Mammary epithelial cell (primary cell): ENCODE measurements at regions of chr19 and their contacts with region 1.

Region 1: DNA sequence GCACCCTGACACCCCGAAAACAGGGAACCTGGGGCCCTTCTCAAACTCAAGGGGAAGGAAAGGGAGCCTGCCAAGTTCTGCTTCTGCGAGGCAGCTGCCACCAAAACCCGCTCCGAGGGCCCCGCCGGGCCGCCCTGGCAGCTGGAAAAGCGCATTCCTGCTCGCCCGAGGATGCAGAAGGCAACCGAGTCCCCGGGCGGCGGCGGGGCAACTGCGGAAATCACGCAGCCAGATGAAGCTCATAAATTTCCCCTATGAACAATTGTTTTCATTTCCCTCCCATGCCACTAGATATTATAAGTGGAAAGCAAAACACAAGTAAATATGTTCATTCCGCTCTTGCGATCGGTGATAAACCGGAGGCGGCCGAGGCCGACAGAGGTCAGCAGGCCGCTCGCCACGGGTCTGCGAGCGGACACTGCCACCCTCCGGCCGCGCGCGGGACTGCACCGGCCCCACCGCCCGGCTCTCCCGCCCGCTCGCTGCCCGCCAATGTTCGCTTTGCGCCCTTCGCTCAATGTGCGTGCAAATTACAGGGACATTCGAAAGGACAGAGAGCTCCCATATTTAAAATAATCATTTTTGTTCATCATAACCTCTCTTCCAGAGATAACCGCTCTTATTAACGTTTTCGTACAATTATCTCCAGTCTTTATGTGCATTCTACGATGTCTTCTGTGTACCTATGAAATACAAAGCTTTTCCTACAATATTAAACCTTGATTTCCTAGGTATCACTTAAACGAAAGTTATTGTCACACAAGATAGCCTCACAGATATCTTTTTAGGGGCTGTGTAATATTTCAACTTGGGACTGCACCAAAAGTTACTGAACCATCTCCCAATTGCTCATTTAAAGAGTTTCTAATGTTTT is 120.8 kb upstream of the ZNF507 start:
- DNase-seq: peak; percentile 27
- H3K4me3 ChIP-seq: no peak overlapping the region
- H3K27ac ChIP-seq: no peak overlapping the region
- H3K4me1 ChIP-seq: peaks cover 3% of the 10 kb centered on the region
- H3K27me3 ChIP-seq: peaks cover 4% of the 10 kb centered on the region
- CTCF ChIP-seq: peak; percentile 71 to 86

Region 2: GRCh38 chr19:30669329-30670010 is 1555.1 kb before region 1 on chr19:
- CTCF ChIA-PET with region 1: no interaction called
- dilution Hi-C with region 1: no loop called
- in situ Hi-C with region 1: loop called in 1 of 2 experiments (anchors 25 kb)
- intact Hi-C with region 1: loop called (anchors 5 kb)
- DNase-seq: peak; percentile 62
- H3K4me3 ChIP-seq: no peak overlapping the region
- H3K27ac ChIP-seq: no peak overlapping the region
- H3K4me1 ChIP-seq: peaks cover 6% of the 10 kb centered on the region
- H3K27me3 ChIP-seq: peaks cover 1% of the 10 kb centered on the region
- CTCF ChIP-seq: peak; percentile 66 to 84

Region 3: DNA sequence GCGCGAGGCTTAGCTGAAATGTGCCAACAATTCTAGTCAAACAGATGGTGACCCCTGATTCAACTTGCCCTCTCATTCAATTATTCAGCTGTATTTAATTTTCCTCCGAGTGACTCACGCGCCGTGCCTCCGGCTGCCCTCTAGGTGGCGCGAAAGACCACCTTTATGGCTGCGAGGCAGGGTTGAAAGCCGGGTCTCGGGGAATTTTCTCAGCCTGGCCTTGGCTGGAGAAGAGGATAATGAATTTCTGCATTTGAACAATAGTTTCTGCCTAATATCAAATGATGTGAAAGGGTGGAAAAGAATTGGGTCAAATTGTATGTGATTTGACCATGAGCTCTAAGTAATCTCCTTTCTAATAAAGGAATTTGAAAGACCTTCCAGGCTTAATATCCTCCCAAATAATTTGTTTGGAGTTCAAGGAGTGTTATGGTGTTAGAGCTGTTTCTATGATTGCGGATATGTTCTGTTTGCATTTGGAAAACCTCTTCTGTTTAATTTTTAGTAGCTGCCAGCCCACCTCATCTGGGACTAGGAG is 1541.5 kb before region 1 on chr19:
- CTCF ChIA-PET with region 1: no interaction called
- dilution Hi-C with region 1: no loop called
- in situ Hi-C with region 1: loop called in 1 of 2 experiments (anchors 25 kb)
- intact Hi-C with region 1: loop called (anchors 2 kb)
- DNase-seq: peak; percentile 68
- H3K4me3 ChIP-seq: no peak overlapping the region
- H3K27ac ChIP-seq: no peak overlapping the region
- H3K4me1 ChIP-seq: no peaks in the 10 kb centered on the region
- H3K27me3 ChIP-seq: no peaks in the 10 kb centered on the region
- CTCF ChIP-seq: peak; percentile 79 to 87

Region 4: DNA sequence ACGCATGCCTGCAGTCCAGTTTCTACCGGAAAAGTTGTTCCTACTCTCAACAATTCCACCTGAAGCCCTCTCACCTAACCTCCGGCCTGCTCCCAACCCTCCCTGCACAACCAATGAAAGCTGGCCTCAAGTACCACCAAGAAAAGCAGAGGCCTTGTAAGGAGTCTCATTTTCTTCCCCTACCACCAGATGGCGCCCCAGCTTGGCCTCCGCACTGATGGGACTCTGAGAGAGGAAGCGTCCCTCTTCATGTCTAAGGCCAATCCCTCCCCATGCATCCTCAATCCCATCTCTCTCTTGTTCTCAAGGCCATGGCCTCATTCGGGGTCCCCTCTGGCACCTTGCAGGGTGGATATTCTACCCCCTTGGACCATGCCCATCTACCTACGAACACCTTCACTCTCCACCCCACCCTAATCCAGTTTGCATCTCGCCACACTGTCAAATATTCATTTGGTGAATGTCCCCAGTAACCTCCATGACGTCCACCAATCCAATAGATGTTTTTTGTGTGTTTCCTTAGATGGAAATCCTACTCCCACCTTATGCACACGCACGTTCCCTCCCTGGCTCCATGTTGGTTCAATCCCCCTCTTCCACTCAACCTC is 1439.7 kb before region 1 on chr19:
- CTCF ChIA-PET with region 1: no interaction called
- dilution Hi-C with region 1: no loop called
- in situ Hi-C with region 1: no loop called
- intact Hi-C with region 1: loop called (anchors 5 kb)
- DNase-seq: peak; percentile 6
- H3K4me3 ChIP-seq: no peak overlapping the region
- H3K27ac ChIP-seq: no peak overlapping the region
- H3K4me1 ChIP-seq: no peaks in the 10 kb centered on the region
- H3K27me3 ChIP-seq: no peaks in the 10 kb centered on the region
- CTCF ChIP-seq: peak; percentile 20 to 41

Region 5: DNA sequence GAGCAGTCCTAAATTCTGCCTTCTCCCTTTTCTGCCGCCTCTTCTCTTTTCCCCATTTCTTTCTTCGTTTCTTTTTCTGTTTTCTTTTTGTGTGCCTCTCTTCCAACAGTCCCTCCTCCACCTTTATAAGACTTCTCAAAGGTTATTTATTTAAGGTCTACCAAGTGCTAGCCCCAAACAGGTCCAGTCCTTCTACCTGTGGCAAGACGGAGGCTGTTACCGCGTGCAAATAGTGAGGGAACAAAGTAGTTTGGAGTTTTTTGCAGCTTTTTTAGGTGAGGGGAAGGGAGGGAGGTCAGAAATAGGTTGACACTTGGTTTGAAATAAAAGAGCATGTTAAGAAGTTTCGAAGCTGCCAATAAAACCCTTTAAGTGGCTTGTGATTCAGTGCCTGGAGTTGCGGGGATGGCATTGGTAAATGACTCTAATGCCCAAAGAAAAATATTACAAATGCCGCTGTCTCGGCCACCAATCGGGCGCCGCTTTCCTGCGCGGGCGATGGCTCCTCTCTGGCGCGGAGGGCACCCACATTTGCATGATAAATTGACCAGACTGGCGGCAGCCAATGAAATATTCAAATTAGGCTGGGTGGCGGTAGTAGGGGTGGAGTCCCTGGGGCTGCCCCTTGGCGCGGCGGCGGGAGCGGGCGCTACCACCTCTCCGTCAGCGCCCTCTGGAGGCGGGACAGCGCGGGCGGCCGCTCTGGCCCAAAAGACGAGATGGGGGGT is 867.9 kb before region 1 on chr19:
- CTCF ChIA-PET with region 1: no interaction called
- dilution Hi-C with region 1: no loop called
- in situ Hi-C with region 1: no loop called
- intact Hi-C with region 1: loop called (anchors 2 kb)
- DNase-seq: no peak
- H3K4me3 ChIP-seq: no peak overlapping the region
- H3K27ac ChIP-seq: no peak overlapping the region
- H3K4me1 ChIP-seq: peaks cover 3% of the 10 kb centered on the region
- H3K27me3 ChIP-seq: no peaks in the 10 kb centered on the region
- CTCF ChIP-seq: peak; percentile 17 to 55

Region 6: DNA sequence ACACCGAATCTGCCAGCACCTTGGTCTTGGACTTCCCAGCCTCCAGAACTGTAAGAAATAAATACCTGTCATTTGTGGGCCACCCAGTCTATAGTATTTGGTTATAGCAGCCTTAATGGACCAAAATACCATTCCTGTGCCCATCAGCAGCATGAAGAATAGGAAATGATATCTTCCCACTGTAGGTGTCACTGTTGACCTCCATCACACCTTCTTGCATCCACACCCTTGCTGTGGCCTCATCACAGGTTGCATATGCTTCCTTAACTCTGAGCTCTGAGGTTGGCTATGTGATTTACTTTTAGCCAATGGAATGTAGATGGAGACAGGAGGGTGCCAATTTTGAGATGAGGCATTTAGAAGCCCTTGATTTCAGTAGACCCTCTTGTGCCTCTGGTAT is 633.3 kb before region 1 on chr19:
- CTCF ChIA-PET with region 1: no interaction called
- dilution Hi-C with region 1: no loop called
- in situ Hi-C with region 1: no loop called
- intact Hi-C with region 1: loop called (anchors 1 kb)
- DNase-seq: peak; percentile 34
- H3K4me3 ChIP-seq: no peak overlapping the region
- H3K27ac ChIP-seq: no peak overlapping the region
- H3K4me1 ChIP-seq: no peaks in the 10 kb centered on the region
- H3K27me3 ChIP-seq: no peaks in the 10 kb centered on the region
- CTCF ChIP-seq: peak in 1 of 2 donors; percentile 29

Region 7: DNA sequence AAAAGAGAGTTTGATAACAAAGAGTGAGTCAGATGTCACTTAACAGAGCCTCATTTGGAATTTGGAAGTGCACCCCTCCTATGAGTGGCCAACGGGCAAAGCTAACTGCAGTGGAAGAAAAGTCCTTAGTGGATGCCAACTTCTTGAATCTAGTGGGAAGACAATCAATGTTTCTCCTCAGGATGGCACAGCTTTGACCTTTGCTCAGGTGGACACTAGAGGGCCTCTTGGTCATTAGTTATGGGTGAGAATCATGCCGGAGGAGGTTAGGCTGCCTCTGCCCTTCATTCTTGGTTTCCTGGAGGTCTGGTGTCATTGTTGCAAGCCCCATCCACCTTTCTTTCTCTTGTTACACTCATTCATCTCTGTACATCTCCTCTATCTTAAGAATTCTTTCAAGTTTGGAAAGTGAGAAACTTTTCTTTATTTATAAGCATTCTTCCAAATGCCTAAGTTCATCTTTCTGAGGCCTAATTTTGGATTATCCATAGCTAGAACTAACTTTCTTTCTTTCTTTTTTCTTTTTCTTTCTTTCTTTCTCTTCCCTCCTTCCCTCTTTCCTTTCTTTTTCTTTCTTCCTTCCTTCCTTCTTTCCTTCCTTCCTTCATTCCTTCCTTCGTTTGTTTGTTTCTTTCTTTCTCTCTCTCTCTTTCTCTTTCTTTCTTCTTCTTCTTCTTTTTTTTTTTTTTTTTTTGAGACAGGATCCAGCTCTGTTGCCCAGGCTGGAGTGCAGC is 548.2 kb before region 1 on chr19:
- CTCF ChIA-PET with region 1: no interaction called
- dilution Hi-C with region 1: no loop called
- in situ Hi-C with region 1: no loop called
- intact Hi-C with region 1: loop called (anchors 1 kb)
- DNase-seq: peak; percentile 14
- H3K4me3 ChIP-seq: no peak overlapping the region
- H3K27ac ChIP-seq: no peak overlapping the region
- H3K4me1 ChIP-seq: peaks cover 6% of the 10 kb centered on the region
- H3K27me3 ChIP-seq: no peaks in the 10 kb centered on the region
- CTCF ChIP-seq: peak; percentile 19 to 31

Region 8: DNA sequence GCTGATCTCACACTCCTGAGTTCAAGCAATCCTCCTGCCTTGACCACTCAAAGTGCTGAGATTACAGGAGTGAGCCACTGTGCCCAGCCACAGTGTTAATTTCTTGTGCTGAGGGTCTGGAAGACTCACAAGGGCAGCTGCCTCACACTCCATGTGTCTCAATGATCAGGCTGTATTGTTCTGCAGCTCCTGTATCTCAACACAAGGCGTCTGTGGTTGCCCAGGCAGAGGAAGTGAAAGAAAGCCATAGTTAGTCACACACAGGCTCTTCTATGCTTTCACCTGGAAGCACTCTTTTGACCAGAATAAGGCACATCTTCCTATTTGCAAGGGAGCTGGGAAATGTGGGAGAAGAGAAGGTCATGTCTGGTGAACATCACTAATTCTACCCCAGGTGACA is 13.5 kb after region 1 on chr19:
- CTCF ChIA-PET with region 1: no interaction called
- dilution Hi-C with region 1: no loop called
- in situ Hi-C with region 1: no loop called
- intact Hi-C with region 1: no loop called
- DNase-seq: no peak
- H3K4me3 ChIP-seq: no peak overlapping the region
- H3K27ac ChIP-seq: no peak overlapping the region
- H3K4me1 ChIP-seq: no peaks in the 10 kb centered on the region
- H3K27me3 ChIP-seq: no peaks in the 10 kb centered on the region
- CTCF ChIP-seq: no peak

Region 9: GRCh38 chr19:32478746-32479145 is 254.1 kb after region 1 on chr19:
- CTCF ChIA-PET with region 1: no interaction called
- dilution Hi-C with region 1: no loop called
- in situ Hi-C with region 1: no loop called
- intact Hi-C with region 1: no loop called
- DNase-seq: no peak
- H3K4me3 ChIP-seq: no peak overlapping the region
- H3K27ac ChIP-seq: no peak overlapping the region
- H3K4me1 ChIP-seq: no peaks in the 10 kb centered on the region
- H3K27me3 ChIP-seq: no peaks in the 10 kb centered on the region
- CTCF ChIP-seq: no peak

Region 10: DNA sequence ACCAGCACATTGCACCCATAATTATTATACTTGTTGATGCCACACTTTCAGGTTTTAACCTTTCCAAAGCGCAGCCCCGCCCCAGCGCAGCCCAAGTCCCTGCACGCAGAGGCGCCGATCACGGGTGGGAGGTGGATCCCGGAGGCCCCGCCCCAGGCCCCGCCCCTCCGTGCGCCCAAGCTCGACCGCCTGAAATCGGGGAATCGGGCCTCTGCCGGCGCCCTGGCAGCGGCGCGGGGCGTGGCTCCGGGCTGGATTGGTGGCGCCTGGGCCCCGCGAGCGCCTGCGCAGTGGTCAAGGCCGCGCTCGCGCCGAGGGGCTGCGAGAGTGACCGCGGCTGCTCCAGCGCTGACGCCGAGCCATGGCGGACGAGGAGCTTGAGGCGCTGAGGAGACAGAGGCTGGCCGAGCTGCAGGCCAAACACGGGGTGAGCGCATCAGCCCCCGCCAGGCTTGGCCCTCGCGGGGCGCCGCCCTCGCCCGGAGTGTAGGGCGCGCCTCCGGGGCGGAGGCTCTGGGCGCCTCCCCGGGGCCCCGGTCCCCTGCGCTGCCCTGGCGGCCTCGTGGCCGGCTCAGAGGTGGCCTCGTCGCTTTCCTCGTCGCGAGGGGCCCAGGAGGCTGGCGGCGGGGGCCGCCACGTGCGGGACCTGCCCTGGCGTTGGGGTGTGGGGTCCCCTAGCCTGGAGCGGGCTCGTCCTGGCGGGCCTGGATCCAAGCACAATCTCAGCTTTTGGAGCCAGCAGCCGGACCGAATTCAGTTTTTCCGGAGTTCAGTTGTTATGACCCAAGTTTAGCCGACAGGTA is 356.5 kb after region 1 on chr19 and contains the start of gene PDCD5:
- CTCF ChIA-PET with region 1: no interaction called
- dilution Hi-C with region 1: no loop called
- in situ Hi-C with region 1: no loop called
- intact Hi-C with region 1: no loop called
- DNase-seq: peak; percentile 92
- H3K4me3 ChIP-seq: peak within 1 kb of the TSS; percentile 93 to 95 (median 93)
- H3K27ac ChIP-seq: peak within 1 kb of the TSS; percentile 92
- H3K4me1 ChIP-seq: peaks cover 8% of the 10 kb centered on the region
- H3K27me3 ChIP-seq: no peaks in the 10 kb centered on the region
- CTCF ChIP-seq: no peak
- total RNA-seq, gene PDCD5: 48.8 to 198 TPM